Left ventricle myocardium superior (tissue), 1 donor: ENCODE measurements at regions of chr10 and their contacts with region 1.

Region 1: DNA sequence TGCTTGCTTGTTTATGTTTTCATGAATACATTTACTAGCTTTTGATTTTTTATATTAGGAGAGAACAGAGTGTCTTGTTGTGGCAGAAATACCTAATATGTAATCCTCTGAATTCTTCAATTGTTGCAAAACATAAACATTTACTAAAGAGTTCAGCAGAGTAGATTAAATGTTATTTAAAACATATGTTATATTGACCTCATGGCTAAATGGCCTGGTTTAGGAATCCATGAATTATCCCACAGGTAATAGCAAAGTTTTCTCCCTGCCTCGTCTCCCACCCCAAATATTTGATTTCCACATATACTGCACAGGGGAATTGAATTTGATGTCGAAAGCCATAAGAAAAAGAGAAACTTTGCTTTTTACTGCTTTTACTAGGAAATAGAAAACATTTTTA is 111.8 kb downstream of the ADK start:
- DNase-seq: no peak
- ATAC-seq: no peak

Region 2: GRCh38 chr10:74342991-74343390 is 80.1 kb after region 1 on chr10:
- intact Hi-C with region 1: no loop called
- DNase-seq: no peak
- ATAC-seq: no peak

Region 3: DNA sequence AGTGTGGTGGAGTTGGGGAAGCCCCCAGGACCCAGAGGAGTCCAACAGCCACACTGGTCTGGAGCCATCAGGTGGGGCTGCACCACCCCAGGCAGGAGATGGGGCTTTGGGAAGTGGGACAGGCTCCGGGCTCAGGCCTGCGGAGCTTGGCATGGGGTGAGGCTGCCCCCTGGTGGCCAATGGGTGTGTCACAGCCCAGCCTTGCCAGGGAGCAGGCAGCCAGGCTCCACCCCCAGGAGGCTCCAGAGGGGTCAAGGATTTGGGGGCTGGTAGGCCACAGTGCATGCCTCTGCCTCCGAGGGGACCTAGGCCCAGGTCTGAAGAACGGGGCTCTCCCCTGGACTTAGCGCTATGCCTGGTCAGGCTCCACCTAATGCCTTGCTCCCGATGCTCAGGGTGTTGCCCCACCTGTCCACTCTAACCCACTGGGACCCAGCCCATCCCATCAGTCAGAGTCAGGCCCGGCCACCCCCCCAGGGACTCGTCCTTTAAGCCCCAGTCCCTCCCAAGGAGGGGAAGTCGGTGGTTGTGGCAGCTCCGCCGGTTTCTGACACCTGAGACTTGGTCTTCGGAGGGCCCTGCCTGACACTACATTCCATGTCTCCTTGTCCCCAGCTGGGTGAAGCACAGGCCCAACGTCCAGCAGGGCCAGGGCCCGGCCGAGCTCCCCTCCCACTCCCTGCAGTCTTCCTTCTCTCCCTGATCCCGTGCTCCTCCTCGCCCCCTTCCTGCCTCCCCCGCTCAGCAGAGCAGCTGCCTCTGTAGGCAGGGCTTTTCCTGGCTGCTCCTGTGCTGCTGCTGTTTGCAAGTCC is 837.3 kb after region 1 on chr10:
- intact Hi-C with region 1: loop called (anchors 10 kb)
- DNase-seq: peak; percentile 90
- ATAC-seq: peak; percentile 80

Region 4: GRCh38 chr10:75235375-75236177 is 972.7 kb after region 1 on chr10 and contains the start of gene COMTD1:
- intact Hi-C with region 1: loop called (anchors 10 kb)
- DNase-seq: peak; percentile 97
- ATAC-seq: peak; percentile 80
- total RNA-seq, gene COMTD1: 30.8 TPM